ENCODE measurements at regions of chr22 and their contacts with region 1.

Region 1: DNA sequence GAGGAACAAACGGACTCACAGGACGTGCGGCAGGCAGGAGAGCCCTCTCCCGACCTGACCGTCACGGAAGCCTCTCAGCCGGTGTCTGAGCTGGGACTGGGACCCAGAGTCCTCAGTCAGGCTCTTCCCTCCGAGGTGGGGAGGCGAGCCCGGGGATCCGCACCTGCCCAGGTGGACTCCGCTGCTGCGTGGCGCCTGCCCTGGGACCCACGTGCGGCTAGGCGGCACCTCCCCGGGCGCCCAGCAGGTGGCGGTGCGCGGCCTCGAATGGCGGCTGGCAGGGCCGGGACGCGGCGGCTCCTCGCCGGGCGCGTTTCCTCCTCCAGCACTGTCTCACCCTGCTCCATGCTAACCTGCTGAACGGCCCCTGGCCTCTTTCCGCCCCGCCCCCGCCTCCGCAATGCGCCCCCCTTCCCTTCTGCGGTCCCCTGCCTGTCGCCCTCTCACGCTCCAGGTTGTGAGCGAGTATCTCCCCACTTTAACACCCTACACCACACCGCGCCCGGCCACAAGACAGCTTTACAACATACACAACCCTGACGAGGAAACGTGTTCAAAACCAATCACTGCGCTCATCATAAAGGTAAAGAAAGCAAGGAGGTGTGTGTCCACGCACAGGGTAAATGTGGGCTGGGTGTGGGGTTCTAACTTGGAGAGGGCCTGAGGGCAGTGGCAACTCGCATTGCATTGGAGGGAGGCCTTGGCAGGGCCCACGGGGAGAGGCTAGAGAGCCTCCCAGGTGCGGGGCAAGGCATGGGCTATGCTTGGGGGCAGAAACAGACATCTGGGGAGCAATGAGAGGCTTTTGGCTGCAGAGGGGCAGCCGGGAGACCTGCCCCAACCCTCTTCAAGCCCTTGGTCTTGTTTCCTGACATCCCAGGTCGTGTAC is 25.9 kb upstream of the ATXN10 start:
- DNase-seq: peak; percentile 94
- H3K4me3 ChIP-seq: peak overlapping the region in 1 of 2 experiments; percentile 35; a peak in 2 of 4 replicates
- H3K27ac ChIP-seq: no peak overlapping the region
- H3K4me1 ChIP-seq: no peaks in the 10 kb centered on the region; a peak in 1 of 4 replicates
- H3K27me3 ChIP-seq: no peaks in the 10 kb centered on the region
- CTCF ChIP-seq: peak; percentile 81
- EP300 ChIP-seq: no peak
- RAD21 ChIP-seq: peak; percentile 91

Region 2: DNA sequence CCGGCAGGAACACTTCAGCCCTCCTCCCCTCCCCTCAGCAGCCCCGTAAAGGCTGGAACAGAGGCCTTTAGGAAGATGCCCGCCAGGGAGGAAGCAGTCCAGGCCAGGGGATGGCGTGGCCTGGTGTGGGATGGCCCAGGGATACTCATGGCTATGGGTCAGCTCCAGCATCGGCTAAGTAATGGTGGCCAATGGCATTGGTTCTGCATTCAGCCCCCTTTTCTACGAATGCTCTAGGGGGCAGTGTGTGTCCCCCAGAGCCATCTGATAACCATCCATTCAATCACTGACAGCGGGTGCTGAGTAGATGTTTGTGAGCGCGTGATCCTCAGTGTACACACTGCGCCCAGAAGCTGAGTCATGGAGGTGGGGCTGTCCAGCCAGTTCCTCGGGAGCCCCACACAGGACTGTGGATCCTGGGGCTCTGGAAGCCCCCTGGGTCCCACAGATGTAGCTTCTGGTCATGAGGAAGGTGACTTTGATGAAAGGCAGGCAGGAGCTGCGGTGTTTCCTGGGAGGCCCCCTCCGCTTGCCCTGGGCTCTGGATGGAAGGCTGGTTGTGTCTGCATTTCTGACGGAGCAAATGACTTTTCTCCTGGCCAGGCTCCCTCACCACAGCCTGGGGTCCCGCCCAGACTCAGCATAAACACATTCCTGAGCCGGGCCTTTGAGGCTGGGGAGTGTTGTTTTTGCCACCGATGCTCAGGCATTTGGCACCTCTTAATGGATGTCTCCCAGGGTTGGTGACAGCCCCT is 96.6 kb before region 1 on chr22:
- CTCF ChIA-PET with region 1: no interaction called
- POLR2A ChIA-PET with region 1: no interaction called
- DNase-seq: no peak
- H3K4me3 ChIP-seq: no peak overlapping the region
- H3K27ac ChIP-seq: no peak overlapping the region; a peak in 1 of 4 replicates
- H3K4me1 ChIP-seq: peaks cover 0 to 18% of the 10 kb centered on the region in 2 experiments; a peak in 1 of 4 replicates
- H3K27me3 ChIP-seq: no peaks in the 10 kb centered on the region
- CTCF ChIP-seq: peak; percentile 29
- EP300 ChIP-seq: no peak
- RAD21 ChIP-seq: no peak

Region 3: GRCh38 chr22:45629469-45630089 is 16.2 kb before region 1 on chr22:
- CTCF ChIA-PET with region 1: interaction called, 13 read pairs
- POLR2A ChIA-PET with region 1: interaction called, 3 read pairs
- DNase-seq: peak; percentile 64
- H3K4me3 ChIP-seq: no peak overlapping the region
- H3K27ac ChIP-seq: no peak overlapping the region
- H3K4me1 ChIP-seq: no peaks in the 10 kb centered on the region
- H3K27me3 ChIP-seq: no peaks in the 10 kb centered on the region; the same call in 1 of the 2 replicates
- CTCF ChIP-seq: no peak
- EP300 ChIP-seq: no peak
- RAD21 ChIP-seq: no peak

Region 4: DNA sequence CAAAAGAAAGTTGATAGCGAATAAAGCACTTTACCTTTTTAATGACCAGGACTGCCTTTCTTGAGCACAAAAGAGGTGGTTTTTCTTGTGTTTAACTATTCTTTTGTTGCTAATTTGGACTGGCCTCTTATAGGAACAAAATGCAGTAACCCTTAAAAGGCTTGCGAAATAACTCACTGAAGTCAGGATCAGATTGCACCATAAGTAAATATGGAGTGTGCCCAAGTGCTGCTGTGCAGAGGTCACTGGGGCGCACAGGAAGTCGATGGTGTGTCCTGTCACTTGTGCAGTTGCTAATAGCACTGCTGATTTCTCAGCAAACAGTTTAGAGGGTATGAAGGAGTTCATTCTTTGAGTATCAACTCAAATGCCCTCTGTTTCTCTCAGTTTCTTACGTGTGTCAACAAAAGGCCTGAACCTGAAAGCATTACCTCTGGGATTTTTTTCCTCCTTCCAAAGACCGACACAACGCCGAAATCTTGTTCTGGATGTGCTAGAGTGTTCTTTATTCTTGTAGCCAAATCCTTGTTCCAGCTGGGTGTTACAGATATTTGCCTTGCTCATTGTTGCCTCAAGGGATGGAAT is 97.2 kb after region 1 on chr22:
- CTCF ChIA-PET with region 1: no interaction called
- POLR2A ChIA-PET with region 1: no interaction called
- DNase-seq: no peak
- H3K4me3 ChIP-seq: no peak overlapping the region
- H3K27ac ChIP-seq: no peak overlapping the region
- H3K4me1 ChIP-seq: no peaks in the 10 kb centered on the region
- H3K27me3 ChIP-seq: no peaks in the 10 kb centered on the region
- CTCF ChIP-seq: no peak
- EP300 ChIP-seq: no peak
- RAD21 ChIP-seq: no peak

Region 5: GRCh38 chr22:45817745-45818423 is 172.1 kb after region 1 on chr22:
- CTCF ChIA-PET with region 1: interaction called, 10 read pairs
- POLR2A ChIA-PET with region 1: no interaction called
- DNase-seq: peak; percentile 44
- H3K4me3 ChIP-seq: no peak overlapping the region
- H3K27ac ChIP-seq: peak overlapping the region in 1 of 2 experiments; percentile 59; a peak in 2 of 4 replicates
- H3K4me1 ChIP-seq: peaks cover 0 to 23% of the 10 kb centered on the region in 2 experiments; a peak in 1 of 4 replicates
- H3K27me3 ChIP-seq: no peaks in the 10 kb centered on the region
- CTCF ChIP-seq: no peak
- EP300 ChIP-seq: peak in 1 of 2 experiments; percentile 16; a peak in 1 of 4 replicates
- RAD21 ChIP-seq: no peak

Region 6: GRCh38 chr22:45968751-45969413 is 323.1 kb after region 1 on chr22:
- CTCF ChIA-PET with region 1: interaction called, 10 read pairs
- POLR2A ChIA-PET with region 1: no interaction called
- DNase-seq: peak; percentile 24
- H3K4me3 ChIP-seq: no peak overlapping the region
- H3K27ac ChIP-seq: no peak overlapping the region
- H3K4me1 ChIP-seq: peaks cover 4 to 5% of the 10 kb centered on the region in 2 experiments; a peak in 2 of 4 replicates
- H3K27me3 ChIP-seq: peaks cover 29% of the 10 kb centered on the region
- CTCF ChIP-seq: no peak
- EP300 ChIP-seq: peak in 1 of 2 experiments; percentile 87; a peak in 2 of 4 replicates
- RAD21 ChIP-seq: no peak

Measured in SK-N-SH (cell line).